ENCODE measurements at regions of chr16 and their contacts with region 1.

Region 1: DNA sequence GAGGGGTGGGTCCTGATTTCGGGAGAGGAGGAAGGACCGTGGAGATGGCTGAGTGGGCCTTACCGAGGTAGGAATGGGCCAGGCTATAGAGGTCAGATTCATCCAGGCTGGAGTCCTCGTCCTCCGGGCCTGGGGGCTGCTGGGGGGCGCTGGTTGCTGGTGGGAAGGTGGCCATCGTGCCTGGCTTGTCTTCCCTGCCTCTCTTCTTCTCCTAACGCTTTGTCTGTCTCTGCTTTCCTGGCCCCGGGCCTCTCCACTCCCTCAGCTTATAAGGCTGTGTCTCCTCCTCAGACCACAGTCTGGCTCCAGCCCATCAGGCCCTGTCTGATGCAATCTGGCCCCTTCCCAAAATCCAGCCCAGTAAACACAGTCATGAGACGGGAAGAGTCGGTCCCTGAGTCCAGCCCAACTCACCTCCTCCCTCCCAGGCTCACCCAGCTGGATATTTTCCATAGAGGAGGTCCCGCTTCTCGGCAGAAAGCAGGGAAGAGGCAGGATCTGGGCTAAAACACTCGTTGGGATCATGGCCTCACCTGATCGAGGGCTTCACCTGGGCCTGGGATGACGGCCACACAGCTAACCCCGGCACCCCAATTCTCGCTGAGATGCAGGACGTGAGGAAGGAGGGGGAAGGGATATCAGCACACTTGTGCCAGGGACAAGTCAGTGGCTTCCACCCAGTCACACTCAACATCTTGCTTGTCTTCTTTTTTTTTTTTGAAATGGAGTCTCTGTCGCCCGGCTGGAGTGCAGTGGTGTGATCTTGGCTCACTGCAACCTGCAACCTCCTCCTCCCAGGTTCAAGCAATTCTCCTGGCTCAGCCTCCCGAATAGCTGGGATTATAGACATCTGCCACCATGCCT is at the start of gene NUPR1:
- DNase-seq: peak; percentile 100
- H3K4me3 ChIP-seq: peak within 1 kb of the TSS; percentile 55 to 62 (median 57)
- H3K27ac ChIP-seq: peak within 1 kb of the TSS; percentile 87 to 97 (median 94)
- H3K4me1 ChIP-seq: peaks cover 0 to 51% (median 31%) of the 10 kb centered on the region in 4 donors
- H3K27me3 ChIP-seq: no peaks in the 10 kb centered on the region
- CTCF ChIP-seq: no peak
- EP300 ChIP-seq: peak in 2 of 4 donors; percentile 63 to 86
- POLR2A ChIP-seq: peak; percentile 79 to 91
- total RNA-seq, gene NUPR1: 54.3 to 83.9 (median 63.4) TPM

Region 2: GRCh38 chr16:27344731-27345151 is 1194.2 kb before region 1 on chr16:
- intact Hi-C with region 1: no loop called
- DNase-seq: no peak
- H3K4me3 ChIP-seq: no peak overlapping the region
- H3K27ac ChIP-seq: no peak overlapping the region
- H3K4me1 ChIP-seq: peaks cover 0 to 14% (median 6%) of the 10 kb centered on the region in 4 donors
- H3K27me3 ChIP-seq: no peaks in the 10 kb centered on the region
- CTCF ChIP-seq: no peak
- EP300 ChIP-seq: no peak
- POLR2A ChIP-seq: no peak

Region 3: GRCh38 chr16:28553776-28554633 is 15.0 kb after region 1 on chr16 and contains the start of gene SGF29:
- intact Hi-C with region 1: loop called (anchors 2 kb)
- DNase-seq: peak; percentile 98
- H3K4me3 ChIP-seq: peak within 1 kb of the TSS; percentile 50 to 70 (median 63)
- H3K27ac ChIP-seq: peak within 1 kb of the TSS; percentile 95 to 98 (median 96)
- H3K4me1 ChIP-seq: peaks cover 0 to 25% (median 22%) of the 10 kb centered on the region in 4 donors
- H3K27me3 ChIP-seq: no peaks in the 10 kb centered on the region
- CTCF ChIP-seq: peak in 1 of 4 experiments; percentile 19
- EP300 ChIP-seq: no peak
- POLR2A ChIP-seq: peak; percentile 81 to 94
- total RNA-seq, gene SGF29: 38.5 to 58.7 (median 44.9) TPM

Region 4: DNA sequence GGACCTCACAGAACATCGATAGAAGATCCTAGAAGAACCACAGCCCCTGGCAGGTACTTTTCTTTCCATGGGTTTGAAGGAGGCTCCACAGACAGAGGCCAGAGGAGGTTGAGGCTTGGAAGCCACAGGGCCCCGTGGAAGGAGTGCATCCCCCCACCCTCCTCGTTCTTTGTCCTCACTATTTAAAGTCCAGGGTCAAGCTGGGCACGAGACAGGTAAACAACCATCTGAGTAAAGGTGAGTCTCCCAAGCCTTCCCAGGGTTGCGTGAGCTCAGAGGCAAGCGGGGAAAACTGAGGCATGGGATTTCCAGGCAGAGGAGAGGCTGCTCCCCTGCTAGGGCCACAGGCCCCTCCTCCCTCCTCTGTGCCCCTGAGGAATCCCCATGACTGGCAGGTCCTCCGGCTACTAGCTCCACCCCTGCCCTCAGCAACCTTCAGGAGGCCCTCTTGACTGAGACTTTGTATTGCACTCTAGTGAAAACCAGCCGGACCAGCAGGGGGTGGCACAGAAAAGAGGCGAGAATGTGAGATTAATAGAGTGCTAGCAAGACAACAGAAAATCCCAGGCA is 58.8 kb after region 1 on chr16:
- intact Hi-C with region 1: no loop called
- DNase-seq: no peak
- H3K4me3 ChIP-seq: no peak overlapping the region
- H3K27ac ChIP-seq: no peak overlapping the region
- H3K4me1 ChIP-seq: peaks cover 0 to 6% (median 2%) of the 10 kb centered on the region in 4 donors
- H3K27me3 ChIP-seq: no peaks in the 10 kb centered on the region
- CTCF ChIP-seq: no peak
- EP300 ChIP-seq: no peak
- POLR2A ChIP-seq: no peak

Measured in sigmoid colon (tissue), 7 donors.